T-cell (primary cell): ENCODE measurements at regions of chr4 and their contacts with region 1.

Region 1: GRCh38 chr4:88613417-88613875 is 21.2 kb downstream of the HERC3 start:
- DNase-seq: peak in 33 of 35 experiments; percentile 17 to 83 (median 51)
- ATAC-seq: peak; percentile 93 to 96 (median 94)
- H3K4me3 ChIP-seq: peak overlapping the region; percentile 14 to 40
- H3K4me3 Mint-ChIP-seq: peak overlapping the region; percentile 59 to 77 (median 75)
- H3K27ac ChIP-seq: peak overlapping the region; percentile 89
- H3K27ac Mint-ChIP-seq: peak overlapping the region; percentile 97 to 99
- H3K4me1 ChIP-seq: peaks cover 27 to 43% of the 10 kb centered on the region in 2 experiments
- H3K4me1 Mint-ChIP-seq: peaks cover 87 to 93% (median 88%) of the 10 kb centered on the region in 3 donors
- H3K27me3 ChIP-seq: no peaks in the 10 kb centered on the region
- H3K27me3 Mint-ChIP-seq: no peaks in the 10 kb centered on the region

Region 2: GRCh38 chr4:88284439-88285234 is 328.8 kb before region 1 on chr4 and contains the start of gene PPM1K:
- CTCF ChIA-PET with region 1: interaction called, 3 to 5 read pairs
- POLR2A ChIA-PET with region 1: interaction called in 1 of 2 experiments, 14 read pairs
- DNase-seq: peak; percentile 97 to 100 (median 99)
- ATAC-seq: peak; percentile 87 to 90 (median 89)
- H3K4me3 ChIP-seq: peak within 1 kb of the TSS; percentile 75 to 85
- H3K4me3 Mint-ChIP-seq: peak within 1 kb of the TSS; percentile 97 to 99 (median 99)
- H3K27ac ChIP-seq: peak within 1 kb of the TSS; percentile 91
- H3K27ac Mint-ChIP-seq: peak within 1 kb of the TSS; percentile 98 to 99
- H3K4me1 ChIP-seq: peaks cover 21 to 24% of the 10 kb centered on the region in 2 experiments
- H3K4me1 Mint-ChIP-seq: peaks cover 42 to 52% (median 51%) of the 10 kb centered on the region in 3 donors
- H3K27me3 ChIP-seq: no peaks in the 10 kb centered on the region
- H3K27me3 Mint-ChIP-seq: no peaks in the 10 kb centered on the region
- total RNA-seq, gene PPM1K: 74.2 to 91.1 (median 84.8) TPM

Region 3: DNA sequence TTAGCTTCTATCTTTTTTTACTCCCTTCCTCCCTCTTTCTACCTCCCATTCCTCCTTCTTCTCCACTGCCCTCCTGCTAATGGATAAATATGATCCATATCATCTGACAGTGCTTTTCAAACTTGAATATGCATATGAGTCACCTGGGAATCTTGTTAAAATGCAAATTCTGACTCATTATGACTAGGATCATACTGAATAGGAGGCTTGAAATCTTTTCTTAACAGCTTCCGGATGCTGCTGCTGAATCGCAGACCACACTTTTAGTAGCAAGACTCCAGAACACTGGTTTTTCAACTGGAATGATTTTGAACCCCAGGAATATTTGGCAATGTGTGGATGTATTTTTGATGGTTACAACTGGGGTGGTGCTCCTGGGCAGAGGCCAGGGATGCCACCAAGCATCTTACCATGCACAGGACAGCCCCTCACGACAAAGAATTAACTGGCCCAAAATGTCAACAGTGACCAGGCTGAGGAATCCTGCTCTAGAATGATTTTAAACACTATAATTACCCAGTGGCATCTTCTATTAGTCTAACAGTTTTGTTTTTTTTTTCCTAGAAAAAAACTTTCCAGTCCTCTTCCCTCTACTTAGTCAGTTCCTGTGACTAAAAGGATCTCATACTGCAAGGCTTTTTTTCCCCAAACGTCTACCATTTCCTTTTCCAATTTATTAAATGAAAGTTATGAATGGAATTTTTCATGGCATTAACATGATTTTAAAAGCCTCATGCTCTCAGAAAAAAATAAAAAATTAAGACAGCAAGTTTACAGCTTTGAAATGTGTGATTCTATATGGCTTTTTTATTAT is 79.3 kb before region 1 on chr4:
- CTCF ChIA-PET with region 1: interaction called, 8 to 10 read pairs
- POLR2A ChIA-PET with region 1: no interaction called
- DNase-seq: no peak
- ATAC-seq: no peak
- H3K4me3 ChIP-seq: no peak overlapping the region
- H3K4me3 Mint-ChIP-seq: no peak overlapping the region
- H3K27ac ChIP-seq: no peak overlapping the region
- H3K27ac Mint-ChIP-seq: no peak overlapping the region
- H3K4me1 ChIP-seq: peaks cover 0 to 3% of the 10 kb centered on the region in 2 experiments
- H3K4me1 Mint-ChIP-seq: peaks cover 0 to under 1% (median under 1%) of the 10 kb centered on the region in 3 donors
- H3K27me3 ChIP-seq: no peaks in the 10 kb centered on the region
- H3K27me3 Mint-ChIP-seq: no peaks in the 10 kb centered on the region

Region 4: DNA sequence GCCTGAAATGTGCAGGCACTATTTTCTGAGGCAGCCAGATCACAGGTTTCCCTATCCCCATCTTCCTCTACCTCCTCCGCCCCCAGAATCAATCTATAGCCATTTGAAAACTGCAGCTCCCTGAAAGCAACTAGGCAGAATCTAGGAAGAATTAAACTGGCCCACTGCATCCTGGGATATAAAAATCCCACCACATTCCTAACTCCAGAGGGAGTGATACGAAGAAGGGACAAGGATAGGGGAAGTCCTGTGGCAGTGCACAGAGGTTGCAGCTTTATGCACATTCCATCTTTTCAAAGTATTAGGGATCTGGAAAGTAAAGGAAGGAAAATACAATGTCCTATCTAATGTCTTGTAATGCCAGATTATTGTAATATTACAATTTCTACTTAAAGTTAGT is 39.5 kb before region 1 on chr4:
- CTCF ChIA-PET with region 1: no interaction called
- POLR2A ChIA-PET with region 1: no interaction called
- DNase-seq: no peak
- ATAC-seq: no peak
- H3K4me3 ChIP-seq: no peak overlapping the region
- H3K4me3 Mint-ChIP-seq: no peak overlapping the region
- H3K27ac ChIP-seq: no peak overlapping the region
- H3K27ac Mint-ChIP-seq: no peak overlapping the region
- H3K4me1 ChIP-seq: no peaks in the 10 kb centered on the region
- H3K4me1 Mint-ChIP-seq: no peaks in the 10 kb centered on the region
- H3K27me3 ChIP-seq: peaks cover 0 to under 1% of the 10 kb centered on the region in 2 experiments
- H3K27me3 Mint-ChIP-seq: peaks cover 0 to 8% of the 10 kb centered on the region in 2 donors

Region 5: DNA sequence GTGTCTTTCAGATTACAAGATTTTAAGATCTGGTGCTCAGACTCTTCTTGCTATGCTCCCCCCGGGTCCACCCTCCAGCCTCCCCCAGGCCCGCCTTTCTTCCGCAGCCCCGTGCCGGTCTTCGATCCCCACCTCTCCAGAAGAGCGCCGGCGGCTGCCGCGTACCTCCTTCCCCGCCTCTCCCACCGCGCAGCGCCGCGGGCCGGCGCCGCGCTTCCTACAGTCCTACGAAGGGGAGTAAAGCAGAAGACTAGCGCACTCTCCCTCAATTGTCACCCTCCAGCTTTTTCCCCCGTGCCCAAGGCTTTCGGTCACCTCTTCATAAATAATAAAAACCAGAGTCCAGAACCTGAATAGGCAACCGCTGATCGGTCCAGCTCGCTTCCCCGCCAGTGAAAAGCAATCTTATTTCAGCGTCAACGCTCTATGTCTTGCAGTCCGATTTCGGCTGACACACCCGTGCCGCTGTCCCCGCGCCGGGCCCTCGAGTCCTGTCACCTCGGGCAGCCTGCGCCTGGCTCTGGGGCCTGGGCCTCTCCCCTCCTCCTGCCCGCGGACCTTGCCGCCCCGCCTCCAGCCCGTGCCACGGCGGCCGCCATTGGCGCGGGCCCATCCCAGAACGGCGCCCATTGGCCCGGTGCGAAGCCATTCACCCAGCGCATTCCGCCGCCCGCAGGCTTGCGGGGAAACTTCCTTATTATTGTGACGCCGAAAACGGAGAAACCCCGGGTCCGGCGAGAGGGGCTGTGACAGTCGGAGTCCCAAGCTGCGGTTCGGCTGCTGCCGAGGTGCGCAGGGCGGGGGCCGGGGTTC is 21.5 kb before region 1 on chr4 and contains the start of gene HERC3:
- CTCF ChIA-PET with region 1: interaction called, 8 to 19 read pairs
- POLR2A ChIA-PET with region 1: interaction called, 22 to 62 read pairs
- DNase-seq: peak; percentile 76 to 93 (median 86)
- ATAC-seq: peak; percentile 88 to 92 (median 90)
- H3K4me3 ChIP-seq: peak within 1 kb of the TSS; percentile 62 to 97
- H3K4me3 Mint-ChIP-seq: peak within 1 kb of the TSS; percentile 91 to 97 (median 94)
- H3K27ac ChIP-seq: peak within 1 kb of the TSS; percentile 83
- H3K27ac Mint-ChIP-seq: peak within 1 kb of the TSS; percentile 89 to 91
- H3K4me1 ChIP-seq: peaks cover 12 to 19% of the 10 kb centered on the region in 2 experiments
- H3K4me1 Mint-ChIP-seq: peaks cover 41 to 46% (median 41%) of the 10 kb centered on the region in 3 donors
- H3K27me3 ChIP-seq: no peaks in the 10 kb centered on the region
- H3K27me3 Mint-ChIP-seq: no peaks in the 10 kb centered on the region
- total RNA-seq, gene HERC3: 68.4 to 91.5 (median 73.6) TPM

Region 6: GRCh38 chr4:88600176-88600838 is 13.1 kb before region 1 on chr4:
- CTCF ChIA-PET with region 1: interaction called, 3 to 8 read pairs
- POLR2A ChIA-PET with region 1: interaction called, 3 to 36 read pairs
- DNase-seq: no peak
- ATAC-seq: peak in 1 of 4 experiments; percentile 57
- H3K4me3 ChIP-seq: no peak overlapping the region
- H3K4me3 Mint-ChIP-seq: peak overlapping the region in 2 of 3 donors; percentile 25 to 66
- H3K27ac ChIP-seq: peak overlapping the region; percentile 5
- H3K27ac Mint-ChIP-seq: peak overlapping the region in 1 of 2 donors; percentile 49
- H3K4me1 ChIP-seq: peaks cover 17 to 34% of the 10 kb centered on the region in 2 experiments
- H3K4me1 Mint-ChIP-seq: peaks cover 64 to 81% (median 80%) of the 10 kb centered on the region in 3 donors
- H3K27me3 ChIP-seq: no peaks in the 10 kb centered on the region
- H3K27me3 Mint-ChIP-seq: no peaks in the 10 kb centered on the region

Region 7: DNA sequence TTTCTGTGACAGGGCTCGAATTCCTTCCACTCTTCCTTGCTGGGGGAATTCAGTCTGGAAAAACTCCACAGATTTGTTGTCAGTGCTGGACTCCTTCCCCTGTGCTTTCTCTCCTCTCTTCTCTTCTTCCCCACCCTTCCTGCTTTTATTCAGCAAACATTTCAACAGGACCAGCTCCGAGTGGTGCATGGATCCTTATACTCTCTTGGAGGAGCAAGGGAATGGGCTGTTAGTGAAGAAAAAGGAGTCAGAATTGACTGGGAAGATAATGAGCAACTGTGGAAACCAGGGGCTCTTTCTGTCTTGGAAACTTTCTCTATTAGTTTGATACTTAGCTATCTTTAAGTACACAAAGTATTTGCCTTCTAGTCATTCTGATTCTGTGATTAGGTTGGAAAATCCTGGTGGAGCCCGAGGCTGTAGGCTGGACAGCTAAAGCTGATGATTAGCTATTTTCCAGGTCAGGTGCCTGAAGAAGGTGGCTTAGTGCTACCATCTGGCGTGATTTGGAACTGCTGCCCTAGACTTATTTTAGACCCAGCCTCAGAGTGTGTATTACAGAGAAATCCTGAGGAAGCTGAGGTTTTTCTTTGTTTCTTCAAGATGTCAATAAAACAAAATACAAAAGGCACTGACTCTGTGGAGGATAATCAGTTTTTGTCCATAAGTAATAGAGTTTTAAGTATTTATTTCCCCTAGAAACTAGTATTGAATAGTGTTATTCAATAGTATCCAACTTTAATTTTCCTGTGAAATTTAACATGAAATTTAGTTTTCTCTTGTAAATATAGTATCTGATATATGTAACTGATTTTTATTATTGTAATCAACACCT is 45.8 kb after region 1 on chr4:
- CTCF ChIA-PET with region 1: interaction called, 5 to 12 read pairs
- POLR2A ChIA-PET with region 1: interaction called in 1 of 2 experiments, 3 read pairs
- DNase-seq: peak in 30 of 35 experiments; percentile 3 to 64 (median 22)
- ATAC-seq: peak; percentile 64 to 82 (median 73)
- H3K4me3 ChIP-seq: no peak overlapping the region
- H3K4me3 Mint-ChIP-seq: no peak overlapping the region
- H3K27ac ChIP-seq: no peak overlapping the region
- H3K27ac Mint-ChIP-seq: peak overlapping the region; percentile 4 to 46
- H3K4me1 ChIP-seq: no peaks in the 10 kb centered on the region
- H3K4me1 Mint-ChIP-seq: peaks cover 10 to 23% (median 14%) of the 10 kb centered on the region in 3 donors
- H3K27me3 ChIP-seq: no peaks in the 10 kb centered on the region
- H3K27me3 Mint-ChIP-seq: no peaks in the 10 kb centered on the region

Region 8: GRCh38 chr4:88964450-88964849 is 351.0 kb after region 1 on chr4:
- CTCF ChIA-PET with region 1: no interaction called
- POLR2A ChIA-PET with region 1: no interaction called
- DNase-seq: no peak
- ATAC-seq: no peak
- H3K4me3 ChIP-seq: no peak overlapping the region
- H3K4me3 Mint-ChIP-seq: no peak overlapping the region
- H3K27ac ChIP-seq: no peak overlapping the region
- H3K27ac Mint-ChIP-seq: no peak overlapping the region
- H3K4me1 ChIP-seq: peaks cover 0 to 10% of the 10 kb centered on the region in 2 experiments
- H3K4me1 Mint-ChIP-seq: peaks cover 7 to 12% (median 7%) of the 10 kb centered on the region in 3 donors
- H3K27me3 ChIP-seq: no peaks in the 10 kb centered on the region
- H3K27me3 Mint-ChIP-seq: no peaks in the 10 kb centered on the region